ENCODE measurements at regions of chr12 and their contacts with region 1.

Region 1: DNA sequence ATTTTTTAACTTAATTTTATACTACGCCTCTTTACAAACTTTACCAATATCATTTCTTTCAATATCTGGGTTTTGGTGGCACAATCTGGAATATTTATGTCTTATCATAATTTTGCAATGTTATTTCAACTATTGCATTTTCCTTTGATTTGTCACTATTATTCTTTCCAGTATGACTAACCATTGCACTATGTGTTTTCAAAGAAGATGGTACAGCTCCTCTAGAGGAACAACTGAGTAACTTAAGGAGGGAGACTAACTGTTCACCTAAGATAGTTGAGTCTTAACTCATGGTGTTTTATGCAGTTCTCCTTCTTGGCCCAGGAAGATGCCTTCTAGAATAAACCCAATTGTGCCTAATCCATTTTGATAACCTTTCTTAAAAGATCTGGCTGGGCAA is 60.5 kb upstream of the KIF21A start:
- DNase-seq: peak in 1 of 2 experiments; percentile 71
- H3K4me3 ChIP-seq: no peak overlapping the region
- H3K27ac ChIP-seq: no peak overlapping the region
- H3K4me1 ChIP-seq: peaks cover 15% of the 10 kb centered on the region
- H3K27me3 ChIP-seq: no peaks in the 10 kb centered on the region
- CTCF ChIP-seq: peak; percentile 37; the same call in 1 of the 2 replicates

Region 2: GRCh38 chr12:38745601-38746000 is 757.8 kb before region 1 on chr12:
- CTCF ChIA-PET with region 1: no interaction called
- POLR2A ChIA-PET with region 1: no interaction called
- intact Hi-C with region 1: no loop called
- DNase-seq: no peak
- H3K4me3 ChIP-seq: no peak overlapping the region
- H3K27ac ChIP-seq: no peak overlapping the region
- H3K4me1 ChIP-seq: no peaks in the 10 kb centered on the region
- H3K27me3 ChIP-seq: no peaks in the 10 kb centered on the region
- CTCF ChIP-seq: no peak

Region 3: GRCh38 chr12:39467432-39467870 is 36.0 kb before region 1 on chr12:
- CTCF ChIA-PET with region 1: no interaction called
- POLR2A ChIA-PET with region 1: interaction called, 10 read pairs
- intact Hi-C with region 1: no loop called
- DNase-seq: no peak
- H3K4me3 ChIP-seq: no peak overlapping the region
- H3K27ac ChIP-seq: no peak overlapping the region
- H3K4me1 ChIP-seq: no peaks in the 10 kb centered on the region
- H3K27me3 ChIP-seq: no peaks in the 10 kb centered on the region
- CTCF ChIP-seq: no peak

Measured in PC-9 (cell line).